K562 (cell line): ENCODE measurements at regions of chr16 and their contacts with region 1.

Region 1: GRCh38 chr16:81095953-81096717 is at the start of gene GCSH:
- DNase-seq: peak; percentile 99 to 100 (median 99)
- ATAC-seq: peak; percentile 98
- H3K4me3 ChIP-seq: peak within 1 kb of the TSS; percentile 93
- H3K27ac ChIP-seq: peak within 1 kb of the TSS; percentile 92
- H3K4me1 ChIP-seq: peaks cover 21 to 26% of the 10 kb centered on the region in 2 experiments
- H3K27me3 ChIP-seq: no peaks in the 10 kb centered on the region
- CTCF ChIP-seq: no peak
- EP300 ChIP-seq: no peak
- POLR2A ChIP-seq: no peak; the same call in none of the 2 replicates
- RAD21 ChIP-seq: no peak
- polyA plus RNA-seq, gene GCSH: 35.0 to 35.2 TPM

Region 2: DNA sequence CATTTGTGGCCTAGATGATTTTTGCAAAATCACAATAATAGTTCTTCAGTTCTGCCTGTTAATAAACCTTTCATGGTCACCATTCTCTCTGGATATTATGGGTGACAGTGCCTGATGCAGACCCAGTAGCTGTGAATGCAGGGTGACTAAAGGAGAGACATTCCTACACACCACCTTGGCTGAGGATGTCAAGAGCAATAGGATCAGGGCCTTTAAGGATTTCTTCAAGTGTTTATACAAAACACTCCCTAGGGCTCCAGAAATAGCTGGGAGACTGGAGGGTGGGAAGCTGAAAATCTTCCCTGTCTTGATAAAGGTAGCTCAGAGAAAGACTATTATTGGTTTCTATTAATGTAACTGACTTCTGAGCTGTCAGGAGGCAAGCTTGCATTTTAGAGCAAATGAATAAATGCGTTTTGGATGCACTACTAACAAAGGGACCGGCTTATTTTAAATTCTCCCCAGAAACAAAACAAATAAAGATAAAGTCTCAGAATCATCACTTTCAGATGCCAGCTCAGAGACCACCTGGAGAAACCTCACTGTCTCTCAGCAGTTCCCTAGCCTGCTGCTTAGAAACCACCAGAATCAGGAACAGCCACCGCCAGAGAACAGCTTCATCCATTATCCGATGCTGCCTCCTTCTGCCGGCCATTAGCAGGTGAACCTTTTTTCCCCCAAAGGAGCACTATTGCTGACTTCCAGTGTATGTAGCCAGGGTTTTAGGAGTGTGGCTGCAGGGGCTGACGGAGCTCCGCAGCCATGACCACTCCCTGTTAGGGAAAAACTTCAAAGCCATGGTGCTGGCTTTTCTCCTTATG is 726.8 kb before region 1 on chr16:
- CTCF ChIA-PET with region 1: no interaction called
- POLR2A ChIA-PET with region 1: no interaction called
- in situ Hi-C with region 1: no loop called
- intact Hi-C with region 1: no loop called
- DNase-seq: peak in 1 of 4 experiments; percentile 14
- ATAC-seq: peak; percentile 65; the same call in 2 of the 3 replicates
- H3K4me3 ChIP-seq: no peak overlapping the region
- H3K27ac ChIP-seq: no peak overlapping the region
- H3K4me1 ChIP-seq: no peaks in the 10 kb centered on the region
- H3K27me3 ChIP-seq: no peaks in the 10 kb centered on the region
- CTCF ChIP-seq: peak in 2 of 3 experiments; percentile 46 to 54; a peak in 4 of 6 replicates
- EP300 ChIP-seq: no peak
- POLR2A ChIP-seq: no peak
- RAD21 ChIP-seq: peak; percentile 50 to 51

Region 3: GRCh38 chr16:81053761-81054160 is 42.4 kb before region 1 on chr16:
- CTCF ChIA-PET with region 1: no interaction called
- POLR2A ChIA-PET with region 1: no interaction called
- in situ Hi-C with region 1: no loop called
- intact Hi-C with region 1: no loop called
- DNase-seq: peak in 2 of 4 experiments; percentile 19 to 29
- ATAC-seq: peak; percentile 66
- H3K4me3 ChIP-seq: no peak overlapping the region
- H3K27ac ChIP-seq: peak overlapping the region; percentile 36; the same call in 1 of the 3 replicates
- H3K4me1 ChIP-seq: peaks cover 0 to 7% of the 10 kb centered on the region in 2 experiments; a peak in 1 of 5 replicates
- H3K27me3 ChIP-seq: no peaks in the 10 kb centered on the region; a peak in 1 of 5 replicates
- CTCF ChIP-seq: no peak
- EP300 ChIP-seq: no peak
- POLR2A ChIP-seq: no peak
- RAD21 ChIP-seq: no peak

Region 4: GRCh38 chr16:81077076-81077940 is 18.8 kb before region 1 on chr16 and contains the start of gene C16orf46:
- CTCF ChIA-PET with region 1: no interaction called
- POLR2A ChIA-PET with region 1: interaction called, 8 read pairs
- in situ Hi-C with region 1: no loop called
- intact Hi-C with region 1: loop called (anchors 2 kb)
- DNase-seq: peak; percentile 94 to 98 (median 96)
- ATAC-seq: peak; percentile 96
- H3K4me3 ChIP-seq: peak within 1 kb of the TSS; percentile 92
- H3K27ac ChIP-seq: peak within 1 kb of the TSS; percentile 81
- H3K4me1 ChIP-seq: peaks cover 7 to 16% of the 10 kb centered on the region in 2 experiments; a peak in 4 of 5 replicates
- H3K27me3 ChIP-seq: no peaks in the 10 kb centered on the region
- CTCF ChIP-seq: no peak
- EP300 ChIP-seq: no peak
- POLR2A ChIP-seq: peak; percentile 90
- RAD21 ChIP-seq: no peak; a peak in 2 of 4 replicates
- polyA plus RNA-seq, gene C16orf46: 0.10 to 0.13 TPM